ENCODE measurements at regions of chr17 and their contacts with region 1.

Region 1: DNA sequence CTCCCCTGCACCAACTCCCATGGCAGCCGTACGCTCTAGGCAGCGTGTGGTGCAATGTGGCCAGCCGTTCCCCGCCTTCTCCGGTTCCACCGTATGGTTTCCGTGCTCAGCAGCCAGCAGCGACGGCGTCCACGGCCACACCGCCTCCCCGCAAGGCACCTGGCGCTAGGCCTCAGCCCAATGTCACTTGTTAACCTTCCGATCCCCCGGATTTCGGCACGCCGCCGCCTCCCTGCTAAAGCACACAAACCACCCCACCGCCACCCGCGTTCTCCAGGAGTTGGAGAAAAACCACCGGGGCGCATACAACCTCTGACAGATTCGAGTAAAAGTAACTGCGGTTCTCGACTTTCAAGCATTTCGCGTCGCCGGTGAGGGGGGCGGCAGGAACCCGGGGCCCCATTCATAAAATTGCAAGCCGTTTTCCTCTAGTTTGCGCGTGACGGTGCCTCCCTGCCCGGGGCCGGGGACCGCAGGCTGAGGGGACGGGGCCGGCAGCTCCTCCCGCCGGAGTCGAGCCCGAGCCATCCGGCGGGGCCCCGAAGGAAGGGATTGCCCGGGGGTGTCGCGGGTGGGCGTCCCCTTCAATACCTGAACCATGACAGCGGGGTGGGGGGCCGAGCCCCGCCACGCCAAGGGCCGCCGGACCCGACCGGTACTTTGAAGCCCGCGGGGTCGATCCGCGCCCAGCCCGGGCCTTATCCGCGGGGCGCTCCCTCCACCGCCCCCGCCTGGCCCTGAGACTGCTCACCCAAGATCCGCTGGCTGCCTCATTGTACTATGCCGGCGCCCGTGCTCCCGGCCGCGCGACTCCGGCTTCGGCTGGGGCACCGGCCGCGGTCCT is at the start of gene TEX2:
- DNase-seq: peak in 2 of 3 donors; percentile 31 to 37
- H3K4me3 ChIP-seq: peak within 1 kb of the TSS; percentile 81 to 86 (median 82)
- H3K4me3 Mint-ChIP-seq: peak within 1 kb of the TSS; percentile 97
- H3K27ac ChIP-seq: peak within 1 kb of the TSS; percentile 54 to 83
- H3K27ac Mint-ChIP-seq: peak within 1 kb of the TSS; percentile 83 to 94 (median 91)
- H3K4me1 ChIP-seq: peaks cover 33 to 39% of the 10 kb centered on the region in 2 donors
- H3K4me1 Mint-ChIP-seq: peaks cover 42% of the 10 kb centered on the region
- H3K27me3 ChIP-seq: no peaks in the 10 kb centered on the region
- H3K27me3 Mint-ChIP-seq: peaks cover 0 to 2% (median 0%) of the 10 kb centered on the region in 3 donors
- CTCF ChIP-seq: no peak
- polyA plus RNA-seq, gene TEX2: 6.5 to 8.7 (median 7.8) TPM

Region 2: GRCh38 chr17:64145757-64146417 is 116.8 kb before region 1 on chr17:
- intact Hi-C with region 1: loop called in 1 of 2 experiments (anchors 5 kb)
- DNase-seq: peak; percentile 97 to 100 (median 98)
- H3K4me3 ChIP-seq: peak overlapping the region; percentile 72 to 95 (median 93)
- H3K4me3 Mint-ChIP-seq: no peak overlapping the region
- H3K27ac ChIP-seq: peak overlapping the region; percentile 66 to 85
- H3K27ac Mint-ChIP-seq: no peak overlapping the region
- H3K4me1 ChIP-seq: peaks cover 25 to 28% of the 10 kb centered on the region in 2 donors
- H3K4me1 Mint-ChIP-seq: peaks cover 24% of the 10 kb centered on the region
- H3K27me3 ChIP-seq: no peaks in the 10 kb centered on the region
- H3K27me3 Mint-ChIP-seq: no peaks in the 10 kb centered on the region
- CTCF ChIP-seq: no peak

Region 3: GRCh38 chr17:64174686-64175456 is 87.8 kb before region 1 on chr17:
- intact Hi-C with region 1: loop called in 1 of 2 experiments (anchors 5 kb)
- DNase-seq: peak; percentile 95 to 99 (median 98)
- H3K4me3 ChIP-seq: peak overlapping the region in 1 of 3 experiments; percentile 54
- H3K4me3 Mint-ChIP-seq: peak overlapping the region; percentile 60 to 73
- H3K27ac ChIP-seq: peak overlapping the region; percentile 82 to 94
- H3K27ac Mint-ChIP-seq: peak overlapping the region; percentile 95 to 99 (median 98)
- H3K4me1 ChIP-seq: peaks cover 59 to 66% of the 10 kb centered on the region in 2 donors
- H3K4me1 Mint-ChIP-seq: peaks cover 59% of the 10 kb centered on the region
- H3K27me3 ChIP-seq: no peaks in the 10 kb centered on the region
- H3K27me3 Mint-ChIP-seq: no peaks in the 10 kb centered on the region
- CTCF ChIP-seq: no peak

Region 4: GRCh38 chr17:64216338-64217248 is 46.0 kb before region 1 on chr17:
- intact Hi-C with region 1: no loop called
- DNase-seq: no peak
- H3K4me3 ChIP-seq: no peak overlapping the region
- H3K4me3 Mint-ChIP-seq: no peak overlapping the region
- H3K27ac ChIP-seq: peak overlapping the region in 1 of 2 donors; percentile 39
- H3K27ac Mint-ChIP-seq: peak overlapping the region; percentile 23 to 91 (median 64)
- H3K4me1 ChIP-seq: peaks cover 19 to 34% of the 10 kb centered on the region in 2 donors
- H3K4me1 Mint-ChIP-seq: peaks cover 43% of the 10 kb centered on the region
- H3K27me3 ChIP-seq: no peaks in the 10 kb centered on the region
- H3K27me3 Mint-ChIP-seq: peaks cover 0 to 6% (median 0%) of the 10 kb centered on the region in 3 donors
- CTCF ChIP-seq: no peak

Region 5: GRCh38 chr17:64306850-64307463 is 44.3 kb after region 1 on chr17:
- intact Hi-C with region 1: no loop called
- DNase-seq: peak; percentile 73 to 75 (median 75)
- H3K4me3 ChIP-seq: no peak overlapping the region
- H3K4me3 Mint-ChIP-seq: no peak overlapping the region
- H3K27ac ChIP-seq: no peak overlapping the region
- H3K27ac Mint-ChIP-seq: no peak overlapping the region
- H3K4me1 ChIP-seq: peaks cover 12 to 17% of the 10 kb centered on the region in 2 donors
- H3K4me1 Mint-ChIP-seq: peaks cover 24% of the 10 kb centered on the region
- H3K27me3 ChIP-seq: no peaks in the 10 kb centered on the region
- H3K27me3 Mint-ChIP-seq: no peaks in the 10 kb centered on the region
- CTCF ChIP-seq: peak; percentile 88

Region 6: DNA sequence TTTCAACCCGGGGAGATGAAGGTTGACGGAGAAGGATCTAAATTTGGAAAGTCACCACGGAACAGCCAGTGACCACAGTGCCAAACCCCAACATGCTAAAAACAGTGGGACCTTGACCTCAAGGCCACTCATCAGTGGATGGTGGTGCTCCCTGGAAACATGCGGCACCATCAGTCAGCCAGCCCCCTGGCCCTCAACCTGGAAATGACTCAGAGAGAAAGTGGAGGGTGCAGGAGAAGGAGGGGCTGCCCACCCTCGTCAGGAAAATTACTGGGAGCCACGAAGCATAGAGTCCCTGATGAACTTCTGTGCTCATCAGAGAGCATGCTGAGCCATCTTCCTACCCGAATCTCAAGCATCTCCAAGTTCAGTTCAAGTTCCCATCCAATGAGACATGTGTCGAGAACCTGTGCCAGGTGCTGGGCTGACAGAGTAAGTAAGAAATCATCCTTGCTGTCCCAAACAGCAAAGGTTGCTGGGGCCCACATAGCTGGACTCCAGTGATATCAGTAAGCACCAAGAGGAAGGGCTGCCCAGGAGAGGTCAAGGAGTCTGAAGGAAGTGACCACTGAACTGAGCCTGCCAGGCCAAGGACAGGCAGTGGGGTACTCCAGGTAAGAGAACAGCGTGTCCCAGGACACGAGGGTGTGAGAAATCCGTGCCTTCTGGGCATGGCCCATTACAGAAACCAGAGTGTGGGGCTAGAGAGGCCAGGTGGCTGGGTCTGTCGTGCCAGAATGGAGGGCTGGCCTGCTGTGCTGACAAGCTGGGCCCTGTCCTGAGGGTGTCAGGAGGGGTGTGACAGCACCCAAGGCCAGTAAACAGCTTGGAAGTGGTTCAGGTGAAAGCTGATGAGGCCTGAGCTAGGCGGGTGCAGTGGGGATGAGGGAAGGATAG is 122.8 kb after region 1 on chr17:
- intact Hi-C with region 1: no loop called
- DNase-seq: peak; percentile 71 to 90 (median 77)
- H3K4me3 ChIP-seq: peak overlapping the region in 1 of 3 experiments; percentile 35
- H3K4me3 Mint-ChIP-seq: peak overlapping the region; percentile 53 to 57
- H3K27ac ChIP-seq: peak overlapping the region; percentile 64 to 78
- H3K27ac Mint-ChIP-seq: peak overlapping the region; percentile 83 to 93 (median 92)
- H3K4me1 ChIP-seq: peaks cover 77 to 90% of the 10 kb centered on the region in 2 donors
- H3K4me1 Mint-ChIP-seq: peaks cover 91% of the 10 kb centered on the region
- H3K27me3 ChIP-seq: no peaks in the 10 kb centered on the region
- H3K27me3 Mint-ChIP-seq: peaks cover 0 to 3% (median 0%) of the 10 kb centered on the region in 3 donors
- CTCF ChIP-seq: no peak

Measured in CD14-positive monocyte (primary cell).